Dendritic cell treated with granulocyte-macrophage colony-stimulating factor and Interleukin-4, amounts not matched to agents 40 ng/mL and 50 ng/mL, for 4 days (primary cell): ENCODE measurements at regions of chr5 and their contacts with region 1.

Region 1: DNA sequence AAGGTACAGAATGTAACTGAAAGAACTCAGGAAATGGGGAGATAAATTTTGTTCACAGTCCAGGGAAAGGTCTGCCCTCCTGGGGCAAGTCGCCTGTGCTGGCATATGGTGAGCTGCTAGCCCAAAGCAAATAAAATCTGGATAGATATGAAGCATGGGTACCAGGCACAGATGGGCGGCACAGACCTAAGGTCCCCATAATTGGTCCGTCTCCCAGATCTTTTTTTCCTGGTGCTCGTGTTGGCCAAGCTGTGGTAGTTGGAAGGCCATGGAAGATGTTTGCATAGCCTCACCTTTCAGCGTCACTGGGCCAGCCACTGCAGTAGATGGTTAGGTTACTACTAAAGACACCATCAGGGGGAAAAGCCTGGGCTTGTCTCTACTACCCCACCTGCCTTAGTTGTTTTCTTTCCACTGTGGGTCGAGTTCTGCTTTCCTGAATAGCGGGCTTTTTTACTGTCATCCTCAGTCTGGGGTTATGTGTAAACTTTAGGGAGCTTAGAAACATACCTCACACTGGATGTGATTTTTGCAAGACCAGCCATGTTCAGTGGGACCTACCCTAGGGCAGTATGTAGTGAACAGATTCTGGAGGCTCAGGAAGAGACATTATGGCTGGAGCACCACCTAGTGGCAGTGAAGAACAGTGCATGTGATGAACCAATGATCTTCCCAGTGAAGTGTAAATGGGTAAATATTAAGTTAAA is 24.2 kb upstream of the GLRX start:
- H3K4me3 Mint-ChIP-seq: no peak overlapping the region
- H3K27ac Mint-ChIP-seq: no peak overlapping the region
- H3K4me1 Mint-ChIP-seq: peaks cover 36% of the 10 kb centered on the region
- H3K27me3 Mint-ChIP-seq: peaks cover 3% of the 10 kb centered on the region

Region 2: DNA sequence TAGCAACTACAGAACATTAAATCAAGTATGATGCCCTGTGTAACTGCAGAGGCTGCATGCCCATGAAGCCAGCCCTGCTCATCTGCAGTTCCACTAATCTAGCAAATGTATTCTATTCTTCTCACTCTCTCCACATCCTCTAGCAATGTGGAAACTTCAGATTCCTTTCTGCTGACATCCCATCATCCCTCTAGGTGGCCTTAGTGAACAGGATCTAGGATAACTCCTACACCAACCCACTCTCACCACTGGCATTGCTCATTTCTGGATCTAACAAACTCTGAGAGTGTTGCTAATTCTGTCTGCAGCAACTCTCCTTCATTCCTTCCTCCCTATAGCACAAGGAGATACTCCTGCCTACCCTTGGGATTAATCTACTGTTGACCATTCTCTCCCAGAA is 374.8 kb before region 1 on chr5:
- intact Hi-C with region 1: no loop called
- H3K4me3 Mint-ChIP-seq: no peak overlapping the region
- H3K27ac Mint-ChIP-seq: no peak overlapping the region
- H3K4me1 Mint-ChIP-seq: no peaks in the 10 kb centered on the region
- H3K27me3 Mint-ChIP-seq: no peaks in the 10 kb centered on the region

Region 3: GRCh38 chr5:95554647-95555548 is 291.8 kb before region 1 on chr5 and contains the starts of genes ARSK and SKIC3:
- intact Hi-C with region 1: loop called (anchors 5 kb)
- H3K4me3 Mint-ChIP-seq: peak within 1 kb of the TSS; percentile 83
- H3K27ac Mint-ChIP-seq: peak within 1 kb of the TSS; percentile 85
- H3K4me1 Mint-ChIP-seq: peaks cover 23% of the 10 kb centered on the region
- H3K27me3 Mint-ChIP-seq: no peaks in the 10 kb centered on the region

Region 4: GRCh38 chr5:95646554-95647431 is 199.9 kb before region 1 on chr5 and contains the start of gene RFESD:
- intact Hi-C with region 1: loop called (anchors 2 kb)
- H3K4me3 Mint-ChIP-seq: peak within 1 kb of the TSS; percentile 77
- H3K27ac Mint-ChIP-seq: peak within 1 kb of the TSS; percentile 92
- H3K4me1 Mint-ChIP-seq: peaks cover 6% of the 10 kb centered on the region
- H3K27me3 Mint-ChIP-seq: no peaks in the 10 kb centered on the region

Region 5: DNA sequence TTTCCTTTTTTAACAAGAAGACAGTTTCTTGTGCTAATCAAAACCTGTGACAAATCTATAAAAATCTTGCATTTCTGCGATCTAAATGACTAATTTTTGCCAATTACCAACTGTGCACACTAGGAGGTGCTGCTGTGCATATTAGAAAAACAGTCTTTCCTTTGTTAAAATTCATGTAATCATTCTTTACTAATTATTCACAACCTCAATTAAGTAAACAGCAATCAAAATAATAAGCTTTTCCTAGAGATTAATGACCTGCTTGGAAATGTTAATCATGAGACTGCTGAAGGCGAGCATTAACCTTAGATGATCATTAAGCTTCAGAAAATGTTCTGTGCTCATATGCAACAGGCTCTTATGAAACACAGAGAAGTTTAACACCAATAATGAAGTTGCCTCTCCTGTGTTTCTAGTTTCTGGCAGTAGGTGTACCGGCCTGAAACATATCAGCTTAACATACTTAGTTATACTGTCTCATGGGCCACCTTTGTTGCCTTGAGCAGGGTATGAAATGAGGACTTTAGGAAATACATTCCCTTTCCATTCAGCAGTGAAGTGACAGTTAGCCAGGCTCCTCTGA is 182.4 kb before region 1 on chr5:
- intact Hi-C with region 1: loop called (anchors 1 kb)
- H3K4me3 Mint-ChIP-seq: no peak overlapping the region
- H3K27ac Mint-ChIP-seq: no peak overlapping the region
- H3K4me1 Mint-ChIP-seq: no peaks in the 10 kb centered on the region
- H3K27me3 Mint-ChIP-seq: no peaks in the 10 kb centered on the region

Region 6: DNA sequence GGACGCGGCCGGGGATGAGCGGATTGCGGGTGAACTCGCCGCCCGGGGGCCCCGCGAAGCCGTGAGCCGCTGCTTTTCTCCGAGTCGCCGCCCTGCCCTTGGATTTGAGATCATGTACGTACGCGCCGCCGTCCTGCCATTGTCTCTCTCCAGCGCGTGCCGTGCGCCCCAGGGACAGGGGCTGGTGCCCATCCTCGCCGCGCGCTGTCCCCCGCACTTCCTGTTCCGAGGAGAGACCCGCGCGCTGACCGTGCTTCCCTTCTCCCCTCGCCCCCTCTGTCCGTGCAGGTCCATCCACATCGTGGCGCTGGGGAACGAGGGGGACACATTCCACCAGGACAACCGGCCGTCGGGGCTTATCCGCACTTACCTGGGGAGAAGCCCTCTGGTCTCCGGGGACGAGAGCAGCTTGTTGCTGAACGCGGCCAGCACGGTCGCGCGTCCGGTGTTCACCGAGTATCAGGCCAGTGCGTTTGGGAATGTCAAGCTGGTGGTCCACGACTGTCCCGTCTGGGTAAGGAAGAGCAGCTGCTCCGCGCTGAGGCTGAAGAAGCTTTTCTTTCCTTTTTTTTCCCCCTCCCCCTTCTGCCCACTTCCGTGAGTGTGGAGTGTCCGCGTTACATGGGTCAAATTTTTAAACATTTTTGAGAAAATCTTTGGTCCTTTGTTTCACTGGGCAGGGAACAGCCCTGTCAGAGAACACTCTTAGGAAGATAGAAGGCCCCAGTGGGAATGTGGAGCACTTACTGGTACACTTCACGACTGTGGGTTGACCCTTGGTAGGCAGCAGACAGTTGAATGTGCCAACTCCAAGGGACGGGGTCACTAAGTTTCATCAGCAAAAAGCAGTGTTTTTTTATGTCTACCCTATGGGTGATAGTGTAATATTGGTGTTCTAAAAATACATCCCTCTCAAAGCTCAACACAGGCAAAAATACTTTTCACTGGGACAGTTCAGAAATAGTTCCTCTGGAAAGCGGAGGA is 114.8 kb before region 1 on chr5:
- intact Hi-C with region 1: no loop called
- H3K4me3 Mint-ChIP-seq: peak overlapping the region; percentile 84
- H3K27ac Mint-ChIP-seq: peak overlapping the region; percentile 70
- H3K4me1 Mint-ChIP-seq: peaks cover 8% of the 10 kb centered on the region
- H3K27me3 Mint-ChIP-seq: peaks cover 19% of the 10 kb centered on the region

Region 7: GRCh38 chr5:95781101-95781583 is 65.6 kb before region 1 on chr5:
- intact Hi-C with region 1: loop called (anchors 1 kb)
- H3K4me3 Mint-ChIP-seq: peak overlapping the region; percentile 17
- H3K27ac Mint-ChIP-seq: peak overlapping the region; percentile 65
- H3K4me1 Mint-ChIP-seq: peaks cover 36% of the 10 kb centered on the region
- H3K27me3 Mint-ChIP-seq: no peaks in the 10 kb centered on the region

Region 8: DNA sequence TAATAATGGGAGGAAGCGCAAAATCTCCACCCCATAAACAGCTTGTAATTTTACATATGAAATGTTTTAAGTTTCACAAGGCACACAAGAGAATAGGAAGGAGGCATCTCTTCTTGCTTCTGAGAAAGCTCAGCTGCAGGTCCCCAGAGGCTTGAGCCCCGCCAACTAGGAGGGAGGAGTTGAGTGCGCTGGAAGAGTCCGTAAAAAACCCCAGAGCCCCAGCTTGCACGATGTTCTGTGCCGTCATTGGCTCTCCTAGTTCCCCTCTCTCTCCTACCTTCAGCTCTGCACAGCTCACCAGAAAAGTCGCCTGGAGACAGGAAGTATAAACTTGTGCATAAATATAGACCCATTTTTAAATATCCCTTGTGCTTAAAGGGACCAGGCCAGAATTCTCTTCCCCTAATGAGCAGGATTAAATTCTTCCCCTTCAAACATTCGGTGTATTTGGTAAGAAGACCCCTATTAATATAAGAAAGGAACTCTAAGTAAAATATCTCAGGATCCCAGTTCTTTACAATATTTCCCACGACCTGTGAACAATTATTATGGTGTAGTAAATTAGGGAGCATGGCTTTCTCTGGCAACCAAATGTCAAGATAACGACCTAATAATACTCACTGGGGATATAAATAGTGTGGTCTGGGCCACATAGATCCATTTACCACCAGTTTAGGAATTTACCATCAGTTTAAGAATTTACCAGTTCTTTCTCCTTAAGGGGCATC is 37.9 kb before region 1 on chr5:
- intact Hi-C with region 1: loop called (anchors 5 kb)
- H3K4me3 Mint-ChIP-seq: peak overlapping the region; percentile 39
- H3K27ac Mint-ChIP-seq: peak overlapping the region; percentile 74
- H3K4me1 Mint-ChIP-seq: peaks cover 57% of the 10 kb centered on the region
- H3K27me3 Mint-ChIP-seq: no peaks in the 10 kb centered on the region

Region 9: DNA sequence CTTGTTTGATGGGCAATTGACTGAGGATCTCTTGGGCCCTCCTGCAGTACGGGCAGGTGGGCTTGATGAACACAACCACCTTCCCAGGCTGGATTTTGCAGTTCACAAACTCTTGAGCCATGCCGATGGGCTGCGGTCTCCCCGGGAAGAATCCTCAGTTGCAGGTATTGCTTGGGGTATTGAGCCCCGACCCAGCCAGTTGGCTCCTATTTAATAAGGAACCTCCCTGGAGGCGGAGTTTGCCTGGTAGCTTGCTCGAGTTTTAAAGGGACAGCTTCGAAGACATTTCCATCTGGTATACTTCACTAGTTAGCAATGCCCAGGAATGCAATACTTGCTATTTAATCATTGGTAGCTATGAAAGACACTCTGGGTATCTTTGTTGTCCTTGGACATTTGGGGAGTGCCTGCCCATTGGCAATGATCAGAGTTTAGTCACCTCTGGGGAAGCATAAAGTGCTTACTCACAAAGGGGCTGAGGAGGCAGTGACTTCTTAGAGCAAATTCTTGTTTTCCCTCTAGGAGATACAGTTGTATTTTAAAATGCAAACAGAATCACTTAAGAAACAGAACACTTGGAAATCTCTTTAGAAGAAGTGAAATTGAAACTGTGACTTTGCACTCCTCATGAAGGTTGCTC is 24.0 kb before region 1 on chr5 and contains the start of gene GLRX:
- intact Hi-C with region 1: loop called (anchors 2 kb)
- H3K4me3 Mint-ChIP-seq: peak within 1 kb of the TSS; percentile 95
- H3K27ac Mint-ChIP-seq: peak within 1 kb of the TSS; percentile 92
- H3K4me1 Mint-ChIP-seq: peaks cover 77% of the 10 kb centered on the region
- H3K27me3 Mint-ChIP-seq: no peaks in the 10 kb centered on the region